Calu3 (cell line): ENCODE measurements at regions of chr16 and their contacts with region 1.

Region 1: DNA sequence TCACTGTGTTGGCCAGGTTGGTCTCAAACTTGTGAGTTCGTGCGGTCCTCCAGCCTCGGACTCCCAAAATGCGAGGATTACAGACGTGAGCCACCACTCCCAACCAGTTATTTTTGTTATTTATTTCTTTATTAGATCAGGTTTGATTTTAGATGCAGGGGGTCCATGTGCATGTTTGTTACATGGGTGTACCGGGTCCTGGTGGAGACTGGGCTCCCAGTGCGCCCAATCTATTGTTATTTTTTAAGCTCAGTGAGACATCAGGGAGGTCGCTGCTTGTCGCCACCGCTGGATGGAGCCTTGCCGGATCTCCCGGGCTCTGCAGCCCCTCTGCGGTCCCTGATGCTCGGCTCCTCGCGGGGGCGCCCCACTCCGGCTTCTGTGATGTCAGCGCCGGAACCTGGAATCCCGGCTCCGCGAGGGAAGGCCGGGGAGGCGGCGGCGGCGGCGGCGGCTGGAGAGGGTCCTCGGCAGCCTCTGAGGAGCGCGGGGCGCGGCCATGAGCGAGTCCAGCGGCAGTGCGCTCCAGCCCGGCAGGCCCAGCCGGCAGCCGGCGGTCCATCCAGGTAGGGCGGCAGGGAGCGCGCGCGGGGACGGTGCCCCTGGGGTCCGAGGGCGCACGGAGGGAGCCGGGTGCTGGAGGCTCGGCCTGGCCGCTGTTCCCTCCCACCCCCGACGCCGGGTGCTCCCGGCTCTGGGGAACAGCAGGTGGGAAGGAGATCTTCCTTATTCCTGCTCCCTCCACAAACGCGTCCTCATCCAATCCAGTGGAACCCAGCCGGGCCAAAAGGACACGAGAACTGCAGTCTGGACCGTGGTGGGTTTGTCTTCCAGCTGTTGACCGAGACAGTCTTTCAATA is at the start of gene TMC7:
- DNase-seq: peak; percentile 99
- H3K4me3 Mint-ChIP-seq: peak within 1 kb of the TSS; percentile 75
- H3K27ac Mint-ChIP-seq: peak within 1 kb of the TSS; percentile 70
- H3K4me1 Mint-ChIP-seq: peaks cover 14% of the 10 kb centered on the region
- H3K27me3 Mint-ChIP-seq: no peaks in the 10 kb centered on the region
- CTCF ChIP-seq: peak; percentile 92
- total RNA-seq, gene TMC7: 10.1 and 10.8 TPM in 2 replicates

Region 2: GRCh38 chr16:18999045-18999393 is 15.2 kb after region 1 on chr16:
- CTCF ChIA-PET with region 1: interaction called, 14 read pairs
- intact Hi-C with region 1: loop called (anchors 1 kb)
- DNase-seq: no peak
- H3K4me3 Mint-ChIP-seq: no peak overlapping the region
- H3K27ac Mint-ChIP-seq: peak overlapping the region; percentile 77
- H3K4me1 Mint-ChIP-seq: peaks cover 26% of the 10 kb centered on the region
- H3K27me3 Mint-ChIP-seq: no peaks in the 10 kb centered on the region
- CTCF ChIP-seq: no peak

Region 3: DNA sequence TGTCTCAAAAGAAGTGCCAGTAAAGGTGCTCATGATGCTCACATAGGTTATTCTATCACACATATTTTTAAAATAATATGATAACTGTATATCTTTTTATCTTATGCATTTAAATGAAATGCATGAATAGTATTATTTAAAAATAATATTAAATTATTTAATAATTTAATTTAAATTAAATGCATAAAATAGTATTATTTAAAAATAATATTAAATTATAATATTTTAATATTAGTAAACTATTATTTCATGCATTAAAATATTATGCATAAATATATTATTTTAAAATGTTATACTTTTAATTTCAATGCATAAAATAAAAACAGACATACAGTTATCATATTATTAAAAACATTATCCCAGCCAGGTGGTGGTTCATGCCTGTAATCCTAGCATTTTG is 33.4 kb after region 1 on chr16:
- CTCF ChIA-PET with region 1: interaction called, 5 read pairs
- intact Hi-C with region 1: loop called (anchors 5 kb)
- DNase-seq: no peak
- H3K4me3 Mint-ChIP-seq: no peak overlapping the region
- H3K27ac Mint-ChIP-seq: no peak overlapping the region
- H3K4me1 Mint-ChIP-seq: no peaks in the 10 kb centered on the region
- H3K27me3 Mint-ChIP-seq: no peaks in the 10 kb centered on the region
- CTCF ChIP-seq: no peak

Region 4: GRCh38 chr16:19375561-19376158 is 391.9 kb after region 1 on chr16:
- CTCF ChIA-PET with region 1: interaction called, 6 read pairs
- intact Hi-C with region 1: loop called (anchors 2 kb)
- DNase-seq: peak; percentile 60
- H3K4me3 Mint-ChIP-seq: no peak overlapping the region
- H3K27ac Mint-ChIP-seq: no peak overlapping the region
- H3K4me1 Mint-ChIP-seq: no peaks in the 10 kb centered on the region
- H3K27me3 Mint-ChIP-seq: no peaks in the 10 kb centered on the region
- CTCF ChIP-seq: peak; percentile 89